ENCODE measurements at regions of chr7 and their contacts with region 1.

Region 1: DNA sequence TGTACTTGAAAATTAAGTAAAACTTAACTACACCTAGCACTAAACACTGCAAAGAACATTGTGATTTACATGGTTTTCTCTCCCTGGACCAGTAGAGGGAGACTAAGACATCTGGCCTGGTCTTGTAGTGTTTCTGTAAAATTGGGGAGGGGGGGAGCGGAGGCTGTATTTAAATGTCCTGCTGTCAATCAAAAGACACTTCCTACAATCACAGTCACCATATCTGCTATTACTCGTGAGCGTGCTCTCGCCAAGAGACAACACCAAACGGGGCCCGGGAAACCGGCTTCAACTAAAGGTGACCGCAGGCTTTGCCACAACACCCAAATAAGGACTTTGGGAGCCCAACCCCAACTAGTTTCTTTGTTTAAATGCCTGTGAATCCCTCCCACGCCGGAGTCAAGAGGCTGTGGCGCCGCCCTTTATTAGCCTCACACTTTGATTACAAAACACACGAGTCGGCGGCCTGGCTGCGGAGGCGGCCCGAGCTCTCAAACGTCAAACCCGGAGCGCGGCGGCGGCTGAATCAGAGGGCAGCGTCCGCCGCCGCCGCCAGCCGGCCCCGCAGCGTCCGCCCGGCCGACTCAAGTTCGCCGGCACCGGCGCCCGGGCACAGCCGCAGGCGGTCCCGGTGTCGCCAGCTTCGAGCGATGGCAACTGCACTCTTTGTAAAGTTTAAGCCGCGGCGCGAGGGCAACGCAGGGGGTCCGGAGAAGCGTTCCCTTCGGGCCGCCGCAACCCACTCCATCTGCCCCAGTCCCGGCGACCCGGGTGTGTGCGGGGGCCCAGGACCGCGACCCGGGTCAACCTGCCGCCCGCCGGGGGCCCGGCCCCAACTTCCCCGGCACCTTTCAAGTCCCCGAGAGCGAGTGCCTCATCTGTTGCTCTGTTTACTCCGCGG is 1.3 kb downstream of the KDM7A start:
- DNase-seq: peak; percentile 86 to 97
- H3K4me3 ChIP-seq: peak overlapping the region; percentile 94 to 97
- H3K27ac ChIP-seq: peak overlapping the region; percentile 100
- H3K4me1 ChIP-seq: peaks cover 8 to 12% of the 10 kb centered on the region in 2 donors
- H3K27me3 ChIP-seq: no peaks in the 10 kb centered on the region
- CTCF ChIP-seq: peak; percentile 74 to 81 (median 79)

Region 2: DNA sequence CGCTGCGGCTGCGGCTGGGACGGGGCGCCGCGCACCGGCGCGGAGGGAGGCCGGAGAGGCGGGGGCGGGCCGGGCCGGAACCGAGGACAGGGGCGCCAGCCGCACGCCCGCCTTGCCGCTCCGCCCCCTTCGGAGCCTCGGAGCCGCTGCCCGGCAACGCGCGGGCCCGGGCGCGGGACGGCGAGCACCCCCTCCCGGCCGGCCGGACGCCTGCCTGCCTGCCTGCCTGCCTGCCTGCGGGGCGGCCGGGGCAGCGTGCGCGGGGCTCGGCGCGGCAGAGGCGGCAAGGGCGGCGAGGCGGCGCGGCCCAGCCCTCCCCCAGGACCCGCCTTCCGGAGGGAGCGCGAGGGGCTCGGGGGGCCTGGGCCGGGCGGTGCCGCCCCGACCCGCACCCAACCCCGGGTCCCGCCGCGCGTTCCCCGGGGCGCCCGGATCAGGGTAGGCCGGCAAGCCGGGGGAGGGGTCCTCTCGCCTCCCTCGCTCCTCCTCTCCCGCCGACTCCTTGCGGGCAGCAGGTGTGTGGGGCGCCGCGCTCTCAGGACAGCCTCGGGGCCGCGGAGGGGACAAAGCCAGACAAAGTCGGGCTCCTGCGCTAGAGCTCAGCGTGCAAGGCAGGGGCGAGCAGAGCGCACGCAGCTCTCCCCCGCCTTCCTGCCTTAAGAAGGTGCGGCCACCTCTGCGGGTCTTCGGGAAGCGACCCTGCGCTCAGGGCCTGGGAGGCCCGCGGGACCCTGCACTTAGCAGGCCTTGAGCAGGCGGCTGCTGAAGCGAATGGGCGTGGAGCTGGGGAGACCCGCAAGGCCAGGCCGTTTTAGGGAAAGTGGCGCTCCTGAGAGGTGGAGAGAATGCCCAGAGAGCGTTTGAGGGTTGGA is 1193.9 kb before region 1 on chr7 and contains the start of gene KIAA1549:
- intact Hi-C with region 1: loop called (anchors 5 kb)
- DNase-seq: peak in 1 of 2 donors; percentile 66
- H3K4me3 ChIP-seq: peak within 1 kb of the TSS; percentile 62 to 67
- H3K27ac ChIP-seq: no peak within 1 kb of the TSS
- H3K4me1 ChIP-seq: peaks cover 0 to 9% of the 10 kb centered on the region in 2 donors
- H3K27me3 ChIP-seq: no peaks in the 10 kb centered on the region
- CTCF ChIP-seq: peak in 1 of 3 experiments; percentile 38
- total RNA-seq, gene KIAA1549: 0.11 TPM

Region 3: DNA sequence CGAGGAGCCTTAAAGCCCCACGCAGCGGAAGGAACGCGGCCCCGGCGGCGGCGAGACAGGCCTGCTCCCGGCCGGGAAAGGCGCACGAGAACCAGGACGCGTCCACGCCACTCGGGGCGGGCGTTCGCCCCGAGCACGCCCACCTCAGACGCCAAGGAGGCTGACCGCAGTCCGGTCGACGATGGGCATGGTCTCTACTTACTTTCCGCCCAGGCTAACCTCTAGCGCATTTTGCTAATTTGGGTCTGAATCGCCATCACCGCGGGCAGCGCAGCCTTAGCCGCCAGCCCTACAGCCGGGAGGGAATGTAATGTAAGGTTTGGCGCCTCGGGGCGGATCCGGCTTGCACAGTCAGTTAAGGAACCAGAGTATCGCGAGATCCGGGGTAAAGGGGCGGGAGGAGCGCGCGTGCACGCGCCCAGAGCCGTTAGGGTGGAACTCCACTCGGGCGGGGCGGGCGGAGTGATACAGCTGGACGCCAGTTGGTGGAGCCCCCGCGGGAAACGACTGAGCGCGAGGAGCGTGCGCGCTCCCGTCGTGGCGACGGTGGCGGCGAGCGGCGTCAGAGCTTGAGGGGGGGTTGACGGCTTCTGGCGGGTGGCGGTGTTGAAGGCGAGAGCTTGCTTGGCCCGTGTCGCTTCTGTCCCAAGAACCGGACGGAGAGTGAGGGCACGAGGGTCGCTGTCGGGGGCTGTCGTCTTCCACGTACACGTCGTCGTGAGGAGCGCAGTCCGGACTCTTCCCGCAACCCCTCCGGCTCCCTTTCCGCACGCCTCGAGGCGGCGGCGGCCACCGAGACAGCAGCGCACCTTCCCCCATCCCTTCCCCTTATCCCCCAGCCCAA is 815.9 kb before region 1 on chr7 and contains the start of gene LUC7L2:
- intact Hi-C with region 1: loop called (anchors 5 kb)
- DNase-seq: peak; percentile 98 to 100
- H3K4me3 ChIP-seq: peak within 1 kb of the TSS; percentile 86 to 96
- H3K27ac ChIP-seq: peak within 1 kb of the TSS; percentile 100
- H3K4me1 ChIP-seq: peaks cover 0 to 26% of the 10 kb centered on the region in 2 donors
- H3K27me3 ChIP-seq: no peaks in the 10 kb centered on the region
- CTCF ChIP-seq: peak in 1 of 3 experiments; percentile 12
- total RNA-seq, gene LUC7L2: 41.0 TPM

Region 4: DNA sequence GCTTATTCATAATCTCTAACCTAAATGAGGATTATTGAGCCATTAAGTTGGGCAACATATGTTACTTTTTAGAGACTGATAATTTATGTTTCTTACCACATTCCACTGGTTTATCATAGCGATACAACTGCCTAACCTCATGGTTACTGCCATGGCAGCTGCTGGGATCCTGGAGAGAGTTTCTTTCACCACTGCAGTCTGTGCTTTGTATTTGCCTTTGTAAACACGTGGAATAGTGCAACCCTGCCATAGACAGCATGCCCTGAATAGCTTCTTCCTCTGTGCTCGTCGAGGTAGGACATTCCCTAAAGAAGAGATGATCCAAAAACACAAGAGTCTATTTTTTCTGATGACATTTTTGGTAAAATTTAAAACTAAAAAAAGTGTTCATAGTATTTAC is 79.0 kb before region 1 on chr7:
- intact Hi-C with region 1: no loop called
- DNase-seq: no peak
- H3K4me3 ChIP-seq: no peak overlapping the region
- H3K27ac ChIP-seq: no peak overlapping the region
- H3K4me1 ChIP-seq: no peaks in the 10 kb centered on the region
- H3K27me3 ChIP-seq: no peaks in the 10 kb centered on the region
- CTCF ChIP-seq: no peak

Region 5: GRCh38 chr7:140200061-140200989 is 24.9 kb after region 1 on chr7:
- intact Hi-C with region 1: loop called (anchors 1 kb)
- DNase-seq: peak; percentile 45 to 86
- H3K4me3 ChIP-seq: no peak overlapping the region
- H3K27ac ChIP-seq: peak overlapping the region; percentile 61 to 67
- H3K4me1 ChIP-seq: peaks cover 0 to 9% of the 10 kb centered on the region in 2 donors
- H3K27me3 ChIP-seq: no peaks in the 10 kb centered on the region
- CTCF ChIP-seq: no peak

Region 6: DNA sequence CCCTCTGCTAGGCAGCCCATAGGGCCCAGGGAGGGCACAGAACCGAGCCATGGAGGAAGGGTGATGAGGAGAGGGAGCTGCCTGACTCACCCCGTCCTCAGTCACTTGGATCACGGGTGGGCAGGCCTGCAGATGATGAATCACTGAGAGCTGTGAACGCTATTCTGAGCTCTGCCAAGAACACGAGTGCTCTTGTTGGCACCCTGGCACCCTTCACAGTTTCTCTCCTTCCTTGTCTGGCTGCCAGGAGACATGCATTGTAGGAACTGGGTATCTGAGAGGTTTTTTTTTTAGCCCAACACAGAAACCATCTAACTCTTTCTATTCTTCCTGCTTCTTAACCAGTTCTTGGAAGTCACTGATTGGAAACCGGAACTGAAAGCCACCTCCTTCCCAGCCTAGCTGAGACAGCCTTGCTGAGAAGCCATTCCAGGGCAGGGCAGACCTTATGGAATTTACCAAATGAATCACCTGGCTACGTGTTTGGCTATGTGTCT is 140.7 kb after region 1 on chr7:
- intact Hi-C with region 1: loop called (anchors 1 kb)
- DNase-seq: peak; percentile 91 to 93
- H3K4me3 ChIP-seq: peak overlapping the region; percentile 27 to 57
- H3K27ac ChIP-seq: peak overlapping the region; percentile 52 to 87
- H3K4me1 ChIP-seq: peaks cover 4 to 8% of the 10 kb centered on the region in 2 donors
- H3K27me3 ChIP-seq: no peaks in the 10 kb centered on the region
- CTCF ChIP-seq: no peak

Region 7: GRCh38 chr7:140397784-140398750 is 222.6 kb after region 1 on chr7 and contains the start of gene SLC37A3:
- intact Hi-C with region 1: loop called (anchors 1 kb)
- DNase-seq: peak; percentile 37 to 89
- H3K4me3 ChIP-seq: peak within 1 kb of the TSS; percentile 81
- H3K27ac ChIP-seq: peak within 1 kb of the TSS; percentile 76 to 83
- H3K4me1 ChIP-seq: peaks cover 0 to 3% of the 10 kb centered on the region in 2 donors
- H3K27me3 ChIP-seq: no peaks in the 10 kb centered on the region
- CTCF ChIP-seq: peak in 1 of 3 experiments; percentile 29
- total RNA-seq, gene SLC37A3: 15.0 TPM

Region 8: DNA sequence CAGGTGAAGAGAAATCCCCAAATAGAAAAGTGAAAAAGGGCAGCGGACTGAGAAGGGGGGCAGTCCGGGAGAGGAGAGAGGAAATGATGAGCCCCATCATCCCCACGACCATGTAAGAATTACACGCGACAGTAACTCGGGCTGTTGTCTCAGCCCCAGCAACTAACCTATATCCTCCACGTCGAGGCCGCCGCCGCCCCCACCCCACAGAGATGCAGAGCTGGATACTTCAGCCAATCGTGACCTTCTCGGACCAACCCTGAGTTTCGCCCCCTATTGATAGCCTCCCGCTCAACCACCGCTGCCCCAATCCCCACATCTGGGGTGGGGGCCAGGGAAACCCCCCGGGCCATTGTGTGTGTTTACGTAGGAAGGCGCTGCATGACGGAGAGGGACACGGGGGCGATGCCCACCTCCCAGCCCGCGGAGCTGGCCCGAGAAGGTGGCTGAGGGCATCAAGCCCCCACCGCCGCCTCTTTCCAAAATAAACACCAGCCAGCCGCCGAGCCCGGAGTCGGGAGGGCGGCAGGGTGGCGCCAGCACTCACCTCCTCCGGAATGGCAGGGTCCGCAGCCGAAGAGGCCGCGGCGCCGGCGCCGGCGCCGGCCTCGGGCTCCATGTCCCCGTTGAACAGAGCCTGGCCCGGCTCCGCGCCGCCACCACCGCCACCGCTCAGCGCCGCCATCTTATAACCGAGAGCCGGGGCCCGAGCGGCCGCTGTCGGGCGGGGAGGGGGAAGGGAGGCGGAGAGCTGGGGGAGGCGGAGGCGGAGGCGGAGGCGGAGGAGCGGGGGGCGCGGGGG is 748.7 kb after region 1 on chr7:
- intact Hi-C with region 1: loop called (anchors 5 kb)
- DNase-seq: peak; percentile 42 to 84
- H3K4me3 ChIP-seq: peak overlapping the region; percentile 95 to 100
- H3K27ac ChIP-seq: peak overlapping the region; percentile 100
- H3K4me1 ChIP-seq: peaks cover 6 to 11% of the 10 kb centered on the region in 2 donors
- H3K27me3 ChIP-seq: no peaks in the 10 kb centered on the region
- CTCF ChIP-seq: peak; percentile 24 to 63 (median 48)

Measured in ascending aorta (tissue), 2 donors.